Activated naive CD4-positive, alpha-beta T cell treated with anti-CD3 and anti-CD28 coated beads for 36 hours (primary cell): ENCODE measurements at regions of chr4 and their contacts with region 1.

Region 1: DNA sequence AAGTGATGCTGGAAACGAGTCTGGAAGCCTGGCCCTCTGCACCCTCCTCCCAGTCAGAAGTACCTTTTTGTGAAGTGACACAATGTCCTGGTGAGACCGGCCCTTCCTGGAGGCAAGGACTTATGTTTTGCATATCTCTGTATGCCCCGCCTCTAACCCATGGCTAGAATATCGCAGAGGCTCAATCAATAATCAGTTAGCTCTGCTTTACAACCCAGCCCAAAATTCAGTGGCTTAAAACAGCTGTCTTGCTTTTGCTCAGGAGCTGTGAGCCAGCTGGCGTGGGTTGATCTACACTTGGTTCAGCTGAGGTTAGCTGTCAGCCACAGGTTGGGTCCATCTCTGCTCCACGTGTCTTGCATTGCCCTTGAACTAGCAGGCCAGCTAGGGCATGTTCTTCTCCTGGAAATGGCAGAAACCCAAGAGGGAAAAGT is 98.8 kb upstream of the METTL14 start:
- DNase-seq: no peak
- H3K4me3 Mint-ChIP-seq: no peak overlapping the region
- H3K27ac Mint-ChIP-seq: no peak overlapping the region
- H3K4me1 Mint-ChIP-seq: peaks cover 16% of the 10 kb centered on the region
- H3K27me3 Mint-ChIP-seq: peaks cover 23% of the 10 kb centered on the region

Region 2: DNA sequence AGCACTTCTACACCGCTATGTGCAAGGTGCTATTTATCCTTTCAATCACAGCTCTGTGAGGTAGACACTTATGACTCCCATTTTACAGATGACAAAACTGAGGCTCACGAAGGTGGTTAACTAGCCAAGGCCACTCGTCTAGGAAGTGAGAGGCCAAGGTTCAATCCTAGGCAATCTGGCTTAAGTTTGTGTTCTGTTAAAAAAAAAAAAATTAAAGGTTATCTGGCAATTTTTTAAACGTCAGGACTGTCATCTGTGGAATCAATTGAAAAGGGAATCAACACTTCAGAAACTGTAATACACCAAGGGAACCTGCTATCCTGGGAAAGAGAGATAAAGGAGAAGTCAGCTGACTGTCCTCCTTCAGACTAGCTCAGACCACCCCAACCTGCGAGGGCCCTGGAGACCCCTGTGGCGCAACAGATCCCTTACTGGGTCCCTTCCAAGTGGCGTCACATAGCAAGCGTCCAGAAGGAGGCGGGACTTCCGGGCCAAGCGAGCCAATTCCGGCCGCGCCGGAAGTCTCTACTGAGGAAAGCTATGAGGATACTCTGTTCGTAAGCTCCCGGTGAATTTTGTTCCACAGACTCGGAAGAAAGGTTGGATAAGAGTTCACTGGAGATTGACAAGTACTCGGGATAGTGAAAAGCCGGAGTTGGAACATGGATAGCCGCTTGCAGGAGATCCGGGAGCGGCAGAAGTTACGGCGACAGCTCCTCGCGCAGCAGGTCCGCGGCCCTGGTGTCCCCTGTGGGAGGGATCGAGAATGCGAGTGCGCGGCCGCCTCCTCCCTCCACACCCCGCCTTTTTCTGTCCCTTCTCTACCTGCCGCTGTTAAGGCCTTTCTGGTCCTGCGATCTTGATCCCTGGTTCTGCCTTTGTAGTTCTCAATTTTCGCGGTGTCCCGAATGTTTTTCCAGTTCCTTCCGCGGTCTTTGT is 98.8 kb after region 1 on chr4 and contains the start of gene METTL14:
- CTCF ChIA-PET with region 1: no interaction called
- intact Hi-C with region 1: loop called (anchors 1 kb)
- DNase-seq: peak; percentile 93
- H3K4me3 Mint-ChIP-seq: peak within 1 kb of the TSS; percentile 95
- H3K27ac Mint-ChIP-seq: peak within 1 kb of the TSS; percentile 89
- H3K4me1 Mint-ChIP-seq: peaks cover 27% of the 10 kb centered on the region
- H3K27me3 Mint-ChIP-seq: no peaks in the 10 kb centered on the region
- total RNA-seq, gene METTL14: 35.9 to 36.9 TPM

Region 3: GRCh38 chr4:118850488-118851173 is 264.3 kb after region 1 on chr4:
- CTCF ChIA-PET with region 1: no interaction called
- intact Hi-C with region 1: loop called (anchors 1 kb)
- DNase-seq: peak; percentile 50
- H3K4me3 Mint-ChIP-seq: peak overlapping the region; percentile 87
- H3K27ac Mint-ChIP-seq: peak overlapping the region; percentile 84
- H3K4me1 Mint-ChIP-seq: peaks cover 18% of the 10 kb centered on the region
- H3K27me3 Mint-ChIP-seq: no peaks in the 10 kb centered on the region

Region 4: GRCh38 chr4:119139822-119140252 is 553.5 kb after region 1 on chr4:
- CTCF ChIA-PET with region 1: no interaction called
- intact Hi-C with region 1: no loop called
- DNase-seq: no peak
- H3K4me3 Mint-ChIP-seq: no peak overlapping the region
- H3K27ac Mint-ChIP-seq: peak overlapping the region; percentile 50
- H3K4me1 Mint-ChIP-seq: peaks cover 26% of the 10 kb centered on the region
- H3K27me3 Mint-ChIP-seq: no peaks in the 10 kb centered on the region

Region 5: GRCh38 chr4:119300101-119300978 is 714.0 kb after region 1 on chr4:
- CTCF ChIA-PET with region 1: no interaction called
- intact Hi-C with region 1: loop called (anchors 5 kb)
- DNase-seq: peak; percentile 92
- H3K4me3 Mint-ChIP-seq: peak overlapping the region; percentile 97
- H3K27ac Mint-ChIP-seq: peak overlapping the region; percentile 95
- H3K4me1 Mint-ChIP-seq: peaks cover 25% of the 10 kb centered on the region
- H3K27me3 Mint-ChIP-seq: no peaks in the 10 kb centered on the region